ENCODE measurements at regions of chr7 and their contacts with region 1.

Region 1: GRCh38 chr7:116994611-116995010 is 41.3 kb downstream of the ST7 start:
- DNase-seq: no peak
- H3K4me3 ChIP-seq: no peak overlapping the region
- H3K4me3 Mint-ChIP-seq: no peak overlapping the region
- H3K27ac ChIP-seq: no peak overlapping the region
- H3K27ac Mint-ChIP-seq: no peak overlapping the region
- H3K4me1 ChIP-seq: no peaks in the 10 kb centered on the region
- H3K4me1 Mint-ChIP-seq: no peaks in the 10 kb centered on the region
- H3K27me3 ChIP-seq: no peaks in the 10 kb centered on the region
- H3K27me3 Mint-ChIP-seq: no peaks in the 10 kb centered on the region

Region 2: GRCh38 chr7:116258734-116259133 is 735.9 kb before region 1 on chr7:
- CTCF ChIA-PET with region 1: no interaction called
- POLR2A ChIA-PET with region 1: no interaction called
- intact Hi-C with region 1: no loop called
- DNase-seq: peak in 4 of 5 donors; percentile 31 to 51 (median 40)
- H3K4me3 ChIP-seq: no peak overlapping the region
- H3K4me3 Mint-ChIP-seq: no peak overlapping the region
- H3K27ac ChIP-seq: no peak overlapping the region
- H3K27ac Mint-ChIP-seq: peak overlapping the region in 5 of 7 donors; percentile 2 to 72 (median 58)
- H3K4me1 ChIP-seq: no peaks in the 10 kb centered on the region
- H3K4me1 Mint-ChIP-seq: peaks cover 2 to 11% (median 7%) of the 10 kb centered on the region in 4 donors
- H3K27me3 ChIP-seq: no peaks in the 10 kb centered on the region
- H3K27me3 Mint-ChIP-seq: no peaks in the 10 kb centered on the region

Region 3: GRCh38 chr7:117008883-117009531 is 14.4 kb after region 1 on chr7:
- CTCF ChIA-PET with region 1: interaction called, 130 read pairs
- POLR2A ChIA-PET with region 1: interaction called, 5 read pairs
- intact Hi-C with region 1: no loop called
- DNase-seq: peak; percentile 47 to 63 (median 54)
- H3K4me3 ChIP-seq: no peak overlapping the region
- H3K4me3 Mint-ChIP-seq: peak overlapping the region; percentile 6 to 84 (median 64)
- H3K27ac ChIP-seq: no peak overlapping the region
- H3K27ac Mint-ChIP-seq: peak overlapping the region in 3 of 7 donors; percentile 23 to 92 (median 78)
- H3K4me1 ChIP-seq: peaks cover 69% of the 10 kb centered on the region
- H3K4me1 Mint-ChIP-seq: peaks cover 50 to 57% (median 52%) of the 10 kb centered on the region in 4 donors
- H3K27me3 ChIP-seq: no peaks in the 10 kb centered on the region
- H3K27me3 Mint-ChIP-seq: no peaks in the 10 kb centered on the region

Measured in CD4-positive, alpha-beta memory T cell (primary cell).